Tibial artery (tissue), 4 donors: ENCODE measurements at regions of chr2 and their contacts with region 1.

Region 1: GRCh38 chr2:176088048-176088936 is 4.2 kb upstream of the HOXD13 start:
- DNase-seq: peak; percentile 51 to 71
- H3K4me3 ChIP-seq: peak overlapping the region in 1 of 2 donors; percentile 15
- H3K27ac ChIP-seq: no peak overlapping the region
- H3K4me1 ChIP-seq: peaks cover 0 to 50% (median 41%) of the 10 kb centered on the region in 4 donors
- H3K27me3 ChIP-seq: peaks cover 11 to 100% of the 10 kb centered on the region in 2 donors
- CTCF ChIP-seq: peak; percentile 71 to 75

Region 2: DNA sequence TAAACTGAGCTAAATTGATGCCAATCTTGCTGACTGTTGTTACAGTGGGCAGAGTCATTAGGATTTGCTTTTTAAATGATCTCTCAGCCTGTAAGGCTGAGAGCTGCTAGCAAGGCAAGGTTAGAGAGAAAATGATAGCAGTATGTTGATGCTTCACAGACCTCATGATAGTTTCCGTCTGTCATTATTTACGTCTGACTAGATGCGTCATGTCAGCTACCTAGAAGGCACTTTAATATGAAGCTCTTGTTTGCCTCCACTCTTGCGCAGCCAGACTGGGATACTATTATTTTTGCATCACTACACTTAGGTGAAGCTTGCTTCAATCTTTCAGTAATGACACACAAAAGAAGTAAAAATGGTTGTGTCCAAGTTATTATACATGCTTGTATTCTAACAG is 400.0 kb before region 1 on chr2:
- intact Hi-C with region 1: loop called (anchors 2 kb)
- DNase-seq: no peak
- H3K4me3 ChIP-seq: no peak overlapping the region
- H3K27ac ChIP-seq: no peak overlapping the region
- H3K4me1 ChIP-seq: no peaks in the 10 kb centered on the region
- H3K27me3 ChIP-seq: peaks cover 0 to 46% of the 10 kb centered on the region in 2 donors
- CTCF ChIP-seq: no peak